ENCODE measurements at regions of chr2 and their contacts with region 1.

Region 1: DNA sequence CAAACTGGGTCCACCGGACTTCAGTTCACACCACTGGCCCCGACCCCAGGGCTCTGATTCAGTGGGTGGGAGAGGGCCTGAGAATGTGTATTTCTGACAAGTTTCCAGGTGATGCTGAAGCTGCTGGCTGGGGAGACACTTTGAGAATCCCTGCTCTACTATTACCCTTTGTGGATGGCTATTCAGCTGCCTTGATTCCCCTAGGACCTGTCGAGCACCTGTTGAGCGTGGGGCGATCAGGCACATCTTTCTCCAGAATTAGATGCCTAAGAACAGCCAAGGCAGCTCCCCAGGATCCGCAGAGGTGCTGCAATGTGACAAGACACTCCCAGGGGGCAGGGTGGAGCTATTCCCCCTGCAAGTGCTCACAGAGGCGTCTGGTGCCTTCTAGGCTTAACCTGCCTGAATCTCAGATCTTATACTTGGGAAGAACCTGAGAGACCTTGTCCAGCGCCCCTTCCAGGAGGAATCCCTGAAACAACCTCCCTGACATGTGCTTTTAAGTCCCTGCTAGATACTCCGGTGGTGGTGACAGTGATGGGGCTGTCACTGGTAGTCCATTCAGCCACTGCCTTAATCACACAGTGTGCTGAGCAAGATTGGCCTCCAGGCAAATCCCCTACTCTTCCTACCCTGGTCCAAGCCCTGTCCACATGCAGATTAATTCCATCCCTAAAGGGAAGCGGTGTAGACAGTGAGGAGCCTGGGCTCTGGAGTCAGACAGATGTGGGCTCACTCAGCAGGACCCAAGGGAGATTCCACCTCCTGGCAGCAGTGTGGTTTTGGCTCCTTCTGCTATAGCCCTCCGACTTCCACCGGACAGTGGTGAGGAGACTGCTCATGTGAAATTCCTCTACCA is 43.4 kb upstream of the OTOF start:
- DNase-seq: peak; percentile 69 to 83
- ATAC-seq: peak; percentile 81 to 92
- H3K4me3 ChIP-seq: no peak overlapping the region
- H3K27ac ChIP-seq: no peak overlapping the region
- H3K4me1 ChIP-seq: no peaks in the 10 kb centered on the region
- CTCF ChIP-seq: peak; percentile 61
- EP300 ChIP-seq: no peak
- POLR2A ChIP-seq: no peak
- RAD21 ChIP-seq: peak; percentile 60 to 68

Region 2: DNA sequence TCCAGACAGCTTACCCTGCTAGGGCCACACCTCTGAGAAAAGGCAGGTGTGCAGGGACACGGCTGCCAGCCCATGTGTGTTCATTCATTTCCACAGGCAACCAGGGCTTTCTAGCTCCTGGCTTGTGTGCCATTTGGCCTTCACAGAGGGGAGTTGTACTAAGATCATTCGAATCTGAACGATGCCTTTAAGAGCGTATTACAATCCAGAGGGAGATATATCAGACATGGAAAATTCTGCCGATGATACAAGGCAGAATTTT is 20.8 kb after region 1 on chr2:
- CTCF ChIA-PET with region 1: interaction called, 12 read pairs
- POLR2A ChIA-PET with region 1: no interaction called
- DNase-seq: no peak
- ATAC-seq: peak in 1 of 2 experiments; percentile 28; a peak in 2 of 6 replicates
- H3K4me3 ChIP-seq: no peak overlapping the region
- H3K27ac ChIP-seq: no peak overlapping the region
- H3K4me1 ChIP-seq: peaks cover 3% of the 10 kb centered on the region; the same call in 1 of the 3 replicates
- CTCF ChIP-seq: no peak
- EP300 ChIP-seq: no peak
- POLR2A ChIP-seq: no peak
- RAD21 ChIP-seq: no peak